CD4-positive, alpha-beta memory T cell (primary cell): ENCODE measurements at regions of chr6 and their contacts with region 1.

Region 1: DNA sequence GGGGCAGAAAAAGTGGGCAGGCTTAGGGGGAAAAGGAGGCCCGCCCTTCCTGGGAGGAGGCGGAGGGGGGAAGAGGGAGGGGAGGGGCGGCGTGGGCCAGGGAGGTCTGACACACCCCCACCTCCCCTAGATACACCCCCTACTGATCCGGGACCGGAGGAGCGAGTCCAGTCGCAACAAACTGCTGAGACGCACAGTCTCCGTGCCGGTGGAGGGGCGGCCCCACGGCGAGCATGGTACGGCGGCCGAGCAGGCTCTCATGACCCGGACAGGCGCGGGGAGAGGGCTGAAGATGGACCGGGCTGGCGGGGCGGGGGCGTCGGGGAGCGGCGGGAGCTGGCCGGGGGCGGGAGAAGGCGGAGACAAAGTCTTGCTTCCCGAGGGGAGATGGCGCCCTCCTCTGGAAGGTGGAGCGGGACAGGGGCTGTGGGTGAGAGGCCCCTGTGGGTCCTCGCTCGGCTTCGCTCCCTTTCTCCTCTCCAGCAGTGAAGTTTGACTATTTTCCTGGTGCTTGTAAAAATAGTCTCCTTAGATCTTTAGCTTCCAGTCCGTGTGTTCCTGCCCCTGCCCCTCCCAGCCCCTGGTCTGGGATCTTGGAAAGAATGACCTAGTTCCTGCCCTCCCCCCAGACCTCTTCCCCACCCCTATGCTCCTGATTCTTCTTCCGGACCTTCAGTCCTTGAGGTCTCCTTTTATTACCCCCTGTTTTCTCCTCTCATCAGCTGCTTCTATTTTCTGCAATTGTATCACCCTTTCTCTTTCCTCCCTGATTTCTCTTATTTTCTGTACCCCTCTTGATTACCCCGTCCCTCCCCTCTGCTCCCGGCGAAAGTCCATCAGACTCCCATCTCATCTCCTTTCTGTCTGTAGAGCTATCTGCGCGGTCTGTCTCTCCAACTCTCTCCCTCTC is 6.1 kb downstream of the SYNGAP1 start:
- DNase-seq: peak; percentile 80 to 87 (median 80)
- H3K4me3 ChIP-seq: peak overlapping the region; percentile 59 to 63
- H3K4me3 Mint-ChIP-seq: peak overlapping the region; percentile 84 to 99 (median 94)
- H3K27ac ChIP-seq: peak overlapping the region; percentile 90
- H3K27ac Mint-ChIP-seq: peak overlapping the region; percentile 96 to 100 (median 98)
- H3K4me1 ChIP-seq: peaks cover 61% of the 10 kb centered on the region
- H3K4me1 Mint-ChIP-seq: peaks cover 62 to 96% (median 68%) of the 10 kb centered on the region in 4 donors
- H3K27me3 ChIP-seq: no peaks in the 10 kb centered on the region
- H3K27me3 Mint-ChIP-seq: no peaks in the 10 kb centered on the region

Region 2: GRCh38 chr6:33299237-33299944 is 126.5 kb before region 1 on chr6:
- CTCF ChIA-PET with region 1: interaction called, 3 read pairs
- POLR2A ChIA-PET with region 1: interaction called, 14 read pairs
- intact Hi-C with region 1: no loop called
- DNase-seq: peak; percentile 91 to 94 (median 93)
- H3K4me3 ChIP-seq: peak overlapping the region; percentile 71 to 97
- H3K4me3 Mint-ChIP-seq: peak overlapping the region; percentile 99
- H3K27ac ChIP-seq: peak overlapping the region; percentile 94
- H3K27ac Mint-ChIP-seq: peak overlapping the region; percentile 96 to 100 (median 99)
- H3K4me1 ChIP-seq: peaks cover 27% of the 10 kb centered on the region
- H3K4me1 Mint-ChIP-seq: peaks cover 22 to 42% (median 31%) of the 10 kb centered on the region in 4 donors
- H3K27me3 ChIP-seq: no peaks in the 10 kb centered on the region
- H3K27me3 Mint-ChIP-seq: peaks cover 0 to 4% of the 10 kb centered on the region in 2 donors

Region 3: DNA sequence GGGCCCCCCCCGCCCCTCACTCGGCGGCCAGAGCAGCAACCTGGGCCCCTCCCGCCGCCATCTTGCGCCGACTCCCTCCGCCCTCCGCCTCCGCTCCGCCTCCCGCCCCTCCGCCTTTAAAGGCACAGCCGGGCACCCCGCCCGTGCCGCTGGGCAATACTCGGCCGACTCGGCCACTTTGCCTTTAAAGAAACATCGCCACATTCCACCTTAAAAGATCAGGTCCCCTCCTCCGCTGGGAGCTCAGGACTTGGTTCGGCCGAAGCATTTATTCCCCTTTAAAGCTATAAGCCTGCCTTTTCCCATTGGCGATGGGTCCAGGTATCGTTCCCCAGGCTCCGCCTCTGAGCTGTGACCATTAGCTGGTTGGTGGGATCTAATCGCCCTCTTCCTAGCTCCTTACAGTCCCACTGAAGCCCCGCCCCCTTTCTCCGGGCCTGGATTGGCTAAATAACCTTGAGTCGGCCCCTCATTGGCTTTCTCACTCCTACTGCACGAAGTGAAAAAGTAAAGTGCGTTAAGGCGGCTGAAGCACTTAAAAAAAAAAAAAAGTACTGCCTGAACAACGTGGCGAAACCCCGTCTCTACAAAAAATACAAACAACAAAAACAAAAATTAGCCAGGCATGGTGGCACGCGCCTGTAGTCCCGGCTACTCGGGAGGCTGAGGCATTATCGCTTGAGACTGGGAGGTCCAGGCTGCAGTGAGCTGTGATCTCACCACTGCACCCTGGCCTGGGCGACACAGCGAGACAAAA is 108.1 kb before region 1 on chr6 and contains the start of gene ZBTB22:
- CTCF ChIA-PET with region 1: no interaction called
- POLR2A ChIA-PET with region 1: interaction called, 19 read pairs
- intact Hi-C with region 1: no loop called
- DNase-seq: peak; percentile 96 to 99 (median 97)
- H3K4me3 ChIP-seq: peak within 1 kb of the TSS; percentile 73 to 100
- H3K4me3 Mint-ChIP-seq: peak within 1 kb of the TSS; percentile 98 to 100 (median 99)
- H3K27ac ChIP-seq: peak within 1 kb of the TSS; percentile 83
- H3K27ac Mint-ChIP-seq: peak within 1 kb of the TSS; percentile 98 to 99 (median 98)
- H3K4me1 ChIP-seq: peaks cover 73% of the 10 kb centered on the region
- H3K4me1 Mint-ChIP-seq: peaks cover 40 to 100% (median 62%) of the 10 kb centered on the region in 4 donors
- H3K27me3 ChIP-seq: no peaks in the 10 kb centered on the region
- H3K27me3 Mint-ChIP-seq: no peaks in the 10 kb centered on the region
- total RNA-seq, gene ZBTB22: 28.6 to 28.7 TPM

Region 4: DNA sequence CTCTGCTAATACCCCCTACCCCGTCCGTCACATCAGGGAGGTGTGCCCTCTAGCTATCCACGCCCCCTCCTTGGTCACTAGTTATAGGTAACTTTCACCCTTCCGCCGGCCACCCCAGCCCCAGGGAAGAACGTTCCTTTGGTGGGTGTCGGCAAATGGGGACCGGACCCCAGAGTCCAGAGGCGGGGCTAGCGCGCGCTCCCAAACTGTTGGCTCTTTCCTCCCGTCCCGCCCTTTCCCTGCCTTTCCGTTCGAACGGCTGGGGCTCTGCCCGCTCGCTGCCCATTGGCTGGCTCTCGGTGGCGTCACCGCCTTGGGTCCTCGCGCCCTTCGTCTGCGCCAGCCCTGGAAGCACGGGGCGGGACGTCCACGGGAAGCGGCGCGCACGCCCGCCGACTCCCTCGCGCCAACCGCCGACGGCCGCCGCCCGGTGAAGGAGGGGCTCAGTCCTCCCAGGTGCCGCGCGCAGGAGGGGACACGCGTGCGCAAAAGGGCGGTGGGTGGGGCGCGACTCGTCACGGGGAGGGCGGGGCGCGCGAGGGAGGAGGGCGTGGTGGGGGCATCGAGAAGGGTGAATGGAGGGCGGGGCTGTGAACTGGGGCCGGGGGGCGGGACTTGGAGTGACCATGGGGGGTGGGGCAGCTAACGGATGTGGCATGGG is 15.7 kb before region 1 on chr6:
- CTCF ChIA-PET with region 1: interaction called, 8 read pairs
- POLR2A ChIA-PET with region 1: interaction called, 64 read pairs
- intact Hi-C with region 1: loop called (anchors 1 kb)
- DNase-seq: peak; percentile 97 to 98 (median 97)
- H3K4me3 ChIP-seq: peak overlapping the region; percentile 67 to 92
- H3K4me3 Mint-ChIP-seq: peak overlapping the region; percentile 85 to 95 (median 92)
- H3K27ac ChIP-seq: peak overlapping the region; percentile 99
- H3K27ac Mint-ChIP-seq: peak overlapping the region; percentile 94 to 100 (median 99)
- H3K4me1 ChIP-seq: peaks cover 57% of the 10 kb centered on the region
- H3K4me1 Mint-ChIP-seq: peaks cover 31 to 68% (median 48%) of the 10 kb centered on the region in 4 donors
- H3K27me3 ChIP-seq: no peaks in the 10 kb centered on the region
- H3K27me3 Mint-ChIP-seq: no peaks in the 10 kb centered on the region

Region 5: GRCh38 chr6:33454009-33454946 is 28.4 kb after region 1 on chr6 and contains the start of gene ZBTB9:
- CTCF ChIA-PET with region 1: interaction called, 3 read pairs
- POLR2A ChIA-PET with region 1: interaction called, 65 read pairs
- intact Hi-C with region 1: loop called (anchors 1 kb)
- DNase-seq: peak; percentile 92 to 96 (median 92)
- H3K4me3 ChIP-seq: peak within 1 kb of the TSS; percentile 84 to 89
- H3K4me3 Mint-ChIP-seq: peak within 1 kb of the TSS; percentile 93 to 99 (median 97)
- H3K27ac ChIP-seq: peak within 1 kb of the TSS; percentile 78
- H3K27ac Mint-ChIP-seq: peak within 1 kb of the TSS; percentile 82 to 98 (median 95)
- H3K4me1 ChIP-seq: peaks cover 29% of the 10 kb centered on the region
- H3K4me1 Mint-ChIP-seq: peaks cover 14 to 43% (median 29%) of the 10 kb centered on the region in 4 donors
- H3K27me3 ChIP-seq: no peaks in the 10 kb centered on the region
- H3K27me3 Mint-ChIP-seq: no peaks in the 10 kb centered on the region
- total RNA-seq, gene ZBTB9: 12.1 to 12.8 TPM

Region 6: GRCh38 chr6:33570806-33571636 is 145.1 kb after region 1 on chr6:
- CTCF ChIA-PET with region 1: no interaction called
- POLR2A ChIA-PET with region 1: interaction called, 22 read pairs
- intact Hi-C with region 1: loop called (anchors 2 kb)
- DNase-seq: peak; percentile 92 to 98 (median 95)
- H3K4me3 ChIP-seq: peak overlapping the region; percentile 13 to 72
- H3K4me3 Mint-ChIP-seq: peak overlapping the region; percentile 90 to 97 (median 94)
- H3K27ac ChIP-seq: peak overlapping the region; percentile 93
- H3K27ac Mint-ChIP-seq: peak overlapping the region; percentile 99 to 100 (median 100)
- H3K4me1 ChIP-seq: peaks cover 23% of the 10 kb centered on the region
- H3K4me1 Mint-ChIP-seq: peaks cover 12 to 44% (median 31%) of the 10 kb centered on the region in 4 donors
- H3K27me3 ChIP-seq: no peaks in the 10 kb centered on the region
- H3K27me3 Mint-ChIP-seq: no peaks in the 10 kb centered on the region